ENCODE measurements at regions of chr9 and their contacts with region 1.

Region 1: GRCh38 chr9:87497604-87498045 is at the start of gene DAPK1:
- DNase-seq: no peak
- ATAC-seq: peak; percentile 75
- H3K4me3 ChIP-seq: peak within 1 kb of the TSS; percentile 82
- H3K27ac ChIP-seq: peak within 1 kb of the TSS; percentile 85
- H3K4me1 ChIP-seq: peaks cover 11% of the 10 kb centered on the region
- H3K27me3 ChIP-seq: no peaks in the 10 kb centered on the region
- CTCF ChIP-seq: peak in 2 of 3 experiments; percentile 34 to 39; a peak in 2 of 6 replicates
- EP300 ChIP-seq: 0 out of 4 replicates have a peak, but pooled peaks of 1 of the 2 experiments have one; percentile 24
- POLR2A ChIP-seq: peak; percentile 75
- RAD21 ChIP-seq: no peak
- polyA plus RNA-seq, gene DAPK1: 8.2 to 10.4 TPM

Region 2: GRCh38 chr9:86354011-86354817 is 1143.4 kb before region 1 on chr9 and contains the start of gene TUT7:
- CTCF ChIA-PET with region 1: no interaction called
- POLR2A ChIA-PET with region 1: no interaction called
- RAD21 ChIA-PET with region 1: no interaction called
- SMC1A ChIA-PET with region 1: no interaction called
- in situ Hi-C with region 1: no loop called
- intact Hi-C with region 1: loop called (anchors 10 kb)
- DNase-seq: peak; percentile 65
- ATAC-seq: peak; percentile 83
- H3K4me3 ChIP-seq: peak within 1 kb of the TSS; percentile 99
- H3K27ac ChIP-seq: peak within 1 kb of the TSS; percentile 94
- H3K4me1 ChIP-seq: no peaks in the 10 kb centered on the region; the same call in 1 of the 2 replicates
- H3K27me3 ChIP-seq: no peaks in the 10 kb centered on the region
- CTCF ChIP-seq: no peak
- EP300 ChIP-seq: no peak
- POLR2A ChIP-seq: peak; percentile 88
- RAD21 ChIP-seq: no peak
- polyA plus RNA-seq, gene TUT7: 10.0 to 10.3 TPM

Region 3: DNA sequence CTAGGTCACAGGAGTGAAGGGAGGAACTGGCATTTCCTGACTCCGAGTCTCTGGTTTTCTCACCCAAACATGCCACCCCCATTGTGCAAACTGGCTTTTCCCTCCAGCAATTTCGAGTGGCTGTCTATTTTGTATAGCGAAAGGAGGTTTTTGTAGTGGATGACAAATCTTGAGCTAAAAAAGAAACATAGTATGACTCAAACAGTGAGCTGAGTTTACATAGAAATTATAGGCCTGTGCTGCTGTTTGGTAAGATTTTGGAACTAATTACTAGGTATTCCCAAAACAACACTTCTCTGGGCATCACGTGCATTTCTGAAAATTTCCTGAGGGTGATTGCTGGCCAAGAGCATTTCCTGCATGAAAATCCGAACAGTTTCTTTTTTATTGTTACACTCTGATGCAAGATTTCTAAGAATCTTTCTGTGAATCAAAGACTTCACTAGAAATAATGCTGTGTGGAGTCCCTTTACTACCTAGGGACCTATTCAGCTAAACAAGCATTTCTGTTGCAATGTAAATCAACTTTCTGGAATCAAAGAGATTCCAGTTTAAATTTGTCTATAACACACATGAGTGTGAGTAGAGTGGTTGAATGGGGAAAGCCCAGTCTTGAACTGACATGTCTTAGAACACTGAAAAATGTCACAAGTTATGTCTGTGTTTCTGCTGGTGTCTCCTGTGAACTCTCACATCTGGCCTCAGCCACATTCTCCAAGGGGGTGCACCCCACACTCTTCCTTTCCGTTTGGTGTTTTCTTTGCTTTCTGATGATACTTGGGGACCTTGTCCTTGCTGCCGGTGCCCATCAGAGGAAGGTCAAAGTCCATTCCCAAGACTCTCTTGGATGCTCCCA is 33.3 kb before region 1 on chr9:
- CTCF ChIA-PET with region 1: interaction called, 7 read pairs
- POLR2A ChIA-PET with region 1: interaction called, 32 read pairs
- RAD21 ChIA-PET with region 1: interaction called, 59 read pairs
- SMC1A ChIA-PET with region 1: interaction called, 43 read pairs
- in situ Hi-C with region 1: no loop called
- intact Hi-C with region 1: loop called (anchors 1 kb)
- DNase-seq: peak; percentile 82
- ATAC-seq: peak; percentile 86
- H3K4me3 ChIP-seq: peak overlapping the region; percentile 12; the same call in 1 of the 2 replicates
- H3K27ac ChIP-seq: peak overlapping the region; percentile 90
- H3K4me1 ChIP-seq: peaks cover 14% of the 10 kb centered on the region
- H3K27me3 ChIP-seq: no peaks in the 10 kb centered on the region
- CTCF ChIP-seq: no peak
- EP300 ChIP-seq: peak; percentile 77 to 84; a peak in 3 of 4 replicates
- POLR2A ChIP-seq: no peak
- RAD21 ChIP-seq: peak; percentile 6; the same call in 1 of the 2 replicates

Region 4: GRCh38 chr9:87557996-87558395 is 60.4 kb after region 1 on chr9:
- CTCF ChIA-PET with region 1: no interaction called
- POLR2A ChIA-PET with region 1: interaction called, 5 read pairs
- RAD21 ChIA-PET with region 1: interaction called, 4 read pairs
- SMC1A ChIA-PET with region 1: interaction called, 5 read pairs
- in situ Hi-C with region 1: no loop called
- intact Hi-C with region 1: loop called (anchors 1 kb)
- DNase-seq: peak; percentile 64
- ATAC-seq: peak; percentile 71
- H3K4me3 ChIP-seq: no peak overlapping the region
- H3K27ac ChIP-seq: peak overlapping the region; percentile 75
- H3K4me1 ChIP-seq: peaks cover 64% of the 10 kb centered on the region
- H3K27me3 ChIP-seq: no peaks in the 10 kb centered on the region
- CTCF ChIP-seq: no peak
- EP300 ChIP-seq: no peak
- POLR2A ChIP-seq: no peak
- RAD21 ChIP-seq: no peak

Region 5: GRCh38 chr9:87581513-87581912 is 83.9 kb after region 1 on chr9:
- CTCF ChIA-PET with region 1: interaction called, 5 read pairs
- POLR2A ChIA-PET with region 1: interaction called, 11 read pairs
- RAD21 ChIA-PET with region 1: interaction called, 5 read pairs
- SMC1A ChIA-PET with region 1: interaction called, 10 read pairs
- in situ Hi-C with region 1: no loop called
- intact Hi-C with region 1: no loop called
- DNase-seq: no peak
- ATAC-seq: no peak
- H3K4me3 ChIP-seq: no peak overlapping the region
- H3K27ac ChIP-seq: no peak overlapping the region
- H3K4me1 ChIP-seq: peaks cover 20% of the 10 kb centered on the region
- H3K27me3 ChIP-seq: no peaks in the 10 kb centered on the region
- CTCF ChIP-seq: no peak
- EP300 ChIP-seq: no peak
- POLR2A ChIP-seq: no peak
- RAD21 ChIP-seq: no peak

Measured in GM12878 (cell line).